Head of caudate nucleus (tissue), 42 donors: ENCODE measurements at regions of chr12 and their contacts with region 1.

Region 1: GRCh38 chr12:99043319-99043914 is 398.3 kb downstream of the APAF1 start:
- DNase-seq: peak in 41 of 42 donors; percentile 46 to 86 (median 73)

Region 2: GRCh38 chr12:99026332-99027054 is 16.9 kb before region 1 on chr12:
- intact Hi-C with region 1: no loop called
- DNase-seq: no peak

Region 3: DNA sequence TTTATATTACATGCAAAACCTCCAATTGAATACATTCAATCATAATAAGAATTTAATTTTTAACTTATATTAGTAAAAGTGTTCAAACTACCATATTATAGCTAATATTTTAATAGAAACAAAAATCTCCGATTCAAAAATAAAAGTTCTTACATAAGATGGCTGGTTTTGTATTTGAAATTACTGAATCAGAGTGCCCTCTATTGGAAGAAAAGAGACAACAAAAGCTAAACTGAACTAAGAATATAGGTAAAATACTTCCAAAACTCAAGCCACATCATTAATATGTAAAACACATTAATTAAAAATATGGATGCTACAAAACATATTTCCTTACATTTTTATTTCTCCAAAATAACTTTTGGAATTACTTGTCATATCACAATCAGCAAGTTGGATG is 724.4 kb after region 1 on chr12:
- intact Hi-C with region 1: loop called (anchors 10 kb)
- DNase-seq: no peak